GM10248 (cell line): ENCODE measurements at regions of chr12 and their contacts with region 1.

Region 1: GRCh38 chr12:9378430-9378835 is 170.2 kb upstream of the PZP start:
- DNase-seq: no peak
- CTCF ChIP-seq: peak; percentile 35

Region 2: DNA sequence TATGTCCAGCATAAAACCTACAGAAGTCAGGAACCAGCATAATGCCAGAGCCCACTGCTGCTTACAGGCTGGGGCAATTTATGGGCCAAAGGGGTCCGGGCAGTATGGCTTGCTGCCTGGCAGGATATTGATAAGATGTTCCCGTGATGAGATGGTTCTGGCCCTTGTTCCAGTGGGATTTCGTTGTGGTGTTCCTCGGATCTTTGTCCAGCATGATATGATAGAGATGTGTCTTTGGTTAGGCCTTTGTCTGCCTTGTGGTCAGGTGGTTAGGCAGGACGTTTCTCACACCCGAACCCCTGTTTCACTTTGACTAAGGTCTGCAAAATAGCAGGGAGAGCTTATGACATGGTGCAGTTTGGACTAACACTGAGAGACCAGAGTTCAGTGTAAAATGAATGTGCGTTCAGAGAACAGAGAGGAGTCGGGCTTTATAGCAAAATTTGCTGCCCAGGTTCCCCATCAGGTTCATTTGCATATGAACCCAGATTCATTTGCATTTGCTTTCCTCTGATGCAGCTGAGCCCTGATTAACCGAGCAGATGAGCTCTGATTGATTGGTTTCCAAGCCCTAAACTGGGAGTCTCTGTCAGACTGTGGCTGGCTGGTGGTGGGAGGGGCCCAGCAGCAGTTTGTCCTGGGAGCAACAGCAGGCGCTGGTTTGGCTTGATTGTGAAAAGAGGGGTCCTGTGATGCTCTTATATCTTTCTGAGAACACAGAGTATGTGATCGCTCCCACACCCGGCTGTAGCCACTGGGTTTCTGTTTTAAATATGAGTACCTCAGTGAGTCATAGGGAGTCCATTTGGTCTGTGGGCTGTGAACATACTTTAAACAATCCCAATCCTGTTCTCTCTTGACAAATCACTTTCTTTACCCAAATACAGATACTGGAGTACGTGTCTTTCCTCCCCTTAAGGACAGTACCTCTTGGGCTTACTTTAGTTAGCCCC is 13.9 kb before region 1 on chr12:
- CTCF ChIA-PET with region 1: interaction called, 14 read pairs
- POLR2A ChIA-PET with region 1: no interaction called
- DNase-seq: peak; percentile 56
- CTCF ChIP-seq: no peak

Region 3: DNA sequence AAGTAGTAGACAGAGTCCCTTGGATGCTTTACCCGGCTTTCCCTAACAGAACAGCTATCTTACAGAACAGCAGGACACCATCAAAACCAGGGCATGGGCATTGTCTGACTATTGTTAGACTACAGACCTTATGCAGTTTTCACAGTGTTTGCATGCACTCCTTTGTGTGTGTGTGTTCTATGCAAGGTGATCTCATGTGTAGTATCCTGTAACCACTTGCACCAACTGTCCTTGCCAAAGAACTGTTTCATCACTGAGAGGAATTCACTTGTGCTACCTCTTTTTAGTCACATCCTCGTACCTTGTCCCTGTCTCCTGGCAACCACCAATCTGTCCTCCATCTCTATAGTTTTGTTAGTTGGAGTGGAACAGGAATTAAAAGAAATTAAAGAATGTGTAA is 13.4 kb after region 1 on chr12:
- CTCF ChIA-PET with region 1: interaction called, 14 read pairs
- POLR2A ChIA-PET with region 1: no interaction called
- DNase-seq: no peak
- CTCF ChIP-seq: no peak

Region 4: GRCh38 chr12:9404469-9405260 is 26.2 kb after region 1 on chr12:
- CTCF ChIA-PET with region 1: no interaction called
- POLR2A ChIA-PET with region 1: no interaction called
- DNase-seq: peak; percentile 16
- CTCF ChIP-seq: no peak

Region 5: GRCh38 chr12:9604287-9604686 is 225.9 kb after region 1 on chr12:
- CTCF ChIA-PET with region 1: no interaction called
- POLR2A ChIA-PET with region 1: no interaction called
- DNase-seq: no peak
- CTCF ChIP-seq: no peak